CD4-positive, alpha-beta T cell (primary cell): ENCODE measurements at regions of chr3 and their contacts with region 1.

Region 1: DNA sequence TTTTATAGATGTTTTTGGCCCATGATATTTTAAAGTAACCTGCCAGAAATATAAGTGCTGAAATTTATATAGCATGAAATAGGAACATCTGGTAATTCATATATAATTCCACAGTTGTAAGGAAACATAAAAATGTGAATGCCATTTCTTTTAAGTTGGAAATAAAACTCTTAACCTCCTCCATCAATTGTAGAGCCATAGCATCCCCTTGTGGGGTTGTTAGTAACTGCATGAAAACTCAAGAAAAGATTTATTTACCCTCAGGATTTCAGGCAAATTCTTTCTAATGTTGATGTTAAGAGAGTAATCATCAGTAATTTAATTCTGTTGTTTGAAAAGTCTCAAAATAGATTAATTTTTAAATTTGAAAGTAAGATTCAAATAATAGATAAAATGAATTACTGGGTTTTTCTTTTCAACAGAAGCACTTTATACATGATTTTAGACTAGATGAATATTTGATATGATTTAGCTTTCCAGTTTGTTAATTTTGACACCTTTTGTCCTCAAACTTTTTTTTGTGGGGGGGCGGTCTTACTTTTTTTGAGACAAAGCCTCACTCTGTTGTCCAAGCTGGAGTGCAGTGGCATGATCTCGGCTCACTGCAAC is 74.7 kb downstream of the RASA2 start:
- DNase-seq: peak in 9 of 14 experiments; percentile 14 to 85 (median 39)
- ATAC-seq: peak; percentile 60
- H3K4me3 ChIP-seq: no peak overlapping the region
- H3K4me3 Mint-ChIP-seq: peak overlapping the region; percentile 55
- H3K27ac ChIP-seq: no peak overlapping the region
- H3K27ac Mint-ChIP-seq: peak overlapping the region; percentile 67
- H3K4me1 ChIP-seq: peaks cover 3% of the 10 kb centered on the region
- H3K4me1 Mint-ChIP-seq: peaks cover 40% of the 10 kb centered on the region
- H3K27me3 ChIP-seq: no peaks in the 10 kb centered on the region
- H3K27me3 Mint-ChIP-seq: no peaks in the 10 kb centered on the region
- CTCF ChIP-seq: peak; percentile 98

Region 2: DNA sequence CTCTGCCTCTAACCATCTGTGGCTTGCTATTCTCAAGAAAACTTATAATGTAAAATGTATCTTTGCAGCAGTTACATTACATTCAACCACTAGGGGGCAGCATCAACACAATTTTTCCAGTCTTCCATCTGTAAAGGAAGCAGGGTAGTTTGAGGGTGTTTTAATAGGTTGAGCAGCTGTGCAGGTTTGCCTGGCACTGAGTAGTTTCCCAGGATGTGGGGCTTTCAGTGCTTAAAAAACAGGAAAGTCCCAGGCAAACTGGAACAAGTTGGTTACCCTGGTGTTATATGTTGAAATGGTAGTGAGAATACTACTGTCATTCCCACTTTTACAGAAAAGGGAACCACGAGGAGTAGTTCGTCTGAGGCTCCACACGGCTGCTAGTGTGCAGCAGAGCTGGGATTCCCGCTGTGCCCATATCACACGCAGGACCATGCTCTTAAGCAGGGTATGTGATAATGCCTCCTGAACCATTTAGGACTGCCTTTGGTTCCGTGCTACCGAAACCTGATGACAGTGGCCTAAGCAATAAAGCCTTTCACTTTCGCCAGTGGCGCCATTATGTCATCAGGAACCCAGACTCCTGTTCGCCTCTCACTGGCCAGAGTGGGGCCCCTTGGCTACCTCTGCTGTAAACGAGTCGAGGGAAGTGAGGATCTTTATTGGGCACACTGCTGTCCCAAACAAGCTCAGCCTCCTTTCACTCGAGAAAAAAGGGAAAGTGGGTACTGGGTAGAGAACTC is 257.9 kb before region 1 on chr3:
- CTCF ChIA-PET with region 1: interaction called, 4 read pairs
- POLR2A ChIA-PET with region 1: no interaction called
- intact Hi-C with region 1: loop called in 1 of 2 experiments (anchors 5 kb)
- DNase-seq: peak in 11 of 14 experiments; percentile 16 to 89 (median 60)
- ATAC-seq: peak; percentile 43
- H3K4me3 ChIP-seq: no peak overlapping the region
- H3K4me3 Mint-ChIP-seq: no peak overlapping the region
- H3K27ac ChIP-seq: no peak overlapping the region
- H3K27ac Mint-ChIP-seq: no peak overlapping the region
- H3K4me1 ChIP-seq: peaks cover 61% of the 10 kb centered on the region
- H3K4me1 Mint-ChIP-seq: peaks cover 81% of the 10 kb centered on the region
- H3K27me3 ChIP-seq: no peaks in the 10 kb centered on the region
- H3K27me3 Mint-ChIP-seq: no peaks in the 10 kb centered on the region
- CTCF ChIP-seq: peak; percentile 80

Region 3: DNA sequence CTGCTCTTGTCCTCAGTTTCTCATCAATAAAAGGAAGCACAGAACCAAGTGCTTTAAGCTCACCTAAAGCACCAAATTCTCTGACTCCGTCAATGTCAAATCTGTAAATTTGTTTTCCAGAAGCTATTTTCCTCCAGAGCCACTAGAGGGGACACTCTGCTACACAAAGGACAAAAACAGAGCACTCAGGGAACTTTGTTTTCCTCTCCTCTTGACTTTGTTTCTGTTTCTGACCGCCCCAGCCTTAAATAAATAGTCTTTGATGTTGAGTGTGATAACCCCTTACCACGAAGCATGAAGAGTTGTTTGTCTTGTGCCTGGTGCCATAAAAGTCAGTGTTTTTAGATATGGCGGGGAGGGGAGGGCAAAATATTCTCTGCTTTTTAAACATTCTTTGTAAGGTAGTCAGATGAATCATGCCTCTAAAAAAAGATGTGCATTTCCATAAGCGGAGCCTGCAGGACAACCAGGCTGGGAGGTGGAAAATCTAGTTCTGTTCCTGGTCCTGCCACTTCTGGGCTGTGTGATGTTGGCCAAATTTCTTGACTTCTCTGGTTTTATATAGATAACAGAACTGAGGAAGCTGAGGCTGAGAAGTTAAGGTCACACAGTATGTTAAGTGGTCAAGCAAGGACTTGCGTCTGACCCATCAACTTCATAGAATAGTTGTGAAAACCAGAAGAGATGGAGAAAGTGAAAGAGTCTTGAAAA is 200.5 kb before region 1 on chr3:
- CTCF ChIA-PET with region 1: interaction called, 4 read pairs
- POLR2A ChIA-PET with region 1: no interaction called
- intact Hi-C with region 1: loop called (anchors 5 kb)
- DNase-seq: peak in 4 of 14 experiments; percentile 21 to 71 (median 68)
- ATAC-seq: peak; percentile 79
- H3K4me3 ChIP-seq: no peak overlapping the region
- H3K4me3 Mint-ChIP-seq: no peak overlapping the region
- H3K27ac ChIP-seq: no peak overlapping the region
- H3K27ac Mint-ChIP-seq: no peak overlapping the region
- H3K4me1 ChIP-seq: peaks cover 9% of the 10 kb centered on the region
- H3K4me1 Mint-ChIP-seq: peaks cover 9% of the 10 kb centered on the region
- H3K27me3 ChIP-seq: no peaks in the 10 kb centered on the region
- H3K27me3 Mint-ChIP-seq: no peaks in the 10 kb centered on the region
- CTCF ChIP-seq: peak; percentile 76

Region 4: DNA sequence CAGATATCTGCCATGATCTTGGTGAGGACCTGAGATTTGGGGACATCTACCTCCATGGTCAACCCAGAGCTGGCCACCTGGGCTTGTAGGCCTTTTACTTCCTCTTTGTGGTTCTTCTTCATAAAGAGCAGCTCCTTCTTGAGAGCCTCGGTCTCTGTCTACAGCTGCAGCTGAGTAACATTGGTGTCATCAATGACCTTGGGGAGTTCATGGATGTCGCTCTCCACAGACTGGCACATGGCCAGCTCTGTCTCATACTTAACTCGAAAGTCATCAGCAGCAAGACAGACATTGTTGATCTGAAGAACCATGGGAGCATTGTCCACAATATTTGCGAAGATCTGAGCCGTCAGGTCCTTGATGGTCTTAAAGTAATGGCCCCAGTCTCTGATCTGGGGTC is 90.4 kb before region 1 on chr3:
- CTCF ChIA-PET with region 1: interaction called, 33 read pairs
- POLR2A ChIA-PET with region 1: interaction called, 6 read pairs
- intact Hi-C with region 1: loop called (anchors 1 kb)
- DNase-seq: no peak
- ATAC-seq: no peak
- H3K4me3 ChIP-seq: no peak overlapping the region
- H3K4me3 Mint-ChIP-seq: no peak overlapping the region
- H3K27ac ChIP-seq: no peak overlapping the region
- H3K27ac Mint-ChIP-seq: no peak overlapping the region
- H3K4me1 ChIP-seq: peaks cover 7% of the 10 kb centered on the region
- H3K4me1 Mint-ChIP-seq: peaks cover 21% of the 10 kb centered on the region
- H3K27me3 ChIP-seq: no peaks in the 10 kb centered on the region
- H3K27me3 Mint-ChIP-seq: no peaks in the 10 kb centered on the region
- CTCF ChIP-seq: no peak

Region 5: GRCh38 chr3:141477224-141477623 is 84.3 kb before region 1 on chr3:
- CTCF ChIA-PET with region 1: interaction called, 33 read pairs
- POLR2A ChIA-PET with region 1: interaction called, 6 read pairs
- intact Hi-C with region 1: loop called (anchors 1 kb)
- DNase-seq: no peak
- ATAC-seq: no peak
- H3K4me3 ChIP-seq: no peak overlapping the region
- H3K4me3 Mint-ChIP-seq: no peak overlapping the region
- H3K27ac ChIP-seq: no peak overlapping the region
- H3K27ac Mint-ChIP-seq: no peak overlapping the region
- H3K4me1 ChIP-seq: peaks cover 19% of the 10 kb centered on the region
- H3K4me1 Mint-ChIP-seq: peaks cover 49% of the 10 kb centered on the region
- H3K27me3 ChIP-seq: no peaks in the 10 kb centered on the region
- H3K27me3 Mint-ChIP-seq: no peaks in the 10 kb centered on the region
- CTCF ChIP-seq: no peak

Region 6: GRCh38 chr3:141913150-141913811 is 351.8 kb after region 1 on chr3:
- CTCF ChIA-PET with region 1: no interaction called
- POLR2A ChIA-PET with region 1: no interaction called
- intact Hi-C with region 1: no loop called
- DNase-seq: peak in 12 of 14 experiments; percentile 16 to 80 (median 34)
- ATAC-seq: peak; percentile 90
- H3K4me3 ChIP-seq: no peak overlapping the region
- H3K4me3 Mint-ChIP-seq: no peak overlapping the region
- H3K27ac ChIP-seq: no peak overlapping the region
- H3K27ac Mint-ChIP-seq: no peak overlapping the region
- H3K4me1 ChIP-seq: no peaks in the 10 kb centered on the region
- H3K4me1 Mint-ChIP-seq: peaks cover 4% of the 10 kb centered on the region
- H3K27me3 ChIP-seq: no peaks in the 10 kb centered on the region
- H3K27me3 Mint-ChIP-seq: no peaks in the 10 kb centered on the region
- CTCF ChIP-seq: peak; percentile 71

Region 7: DNA sequence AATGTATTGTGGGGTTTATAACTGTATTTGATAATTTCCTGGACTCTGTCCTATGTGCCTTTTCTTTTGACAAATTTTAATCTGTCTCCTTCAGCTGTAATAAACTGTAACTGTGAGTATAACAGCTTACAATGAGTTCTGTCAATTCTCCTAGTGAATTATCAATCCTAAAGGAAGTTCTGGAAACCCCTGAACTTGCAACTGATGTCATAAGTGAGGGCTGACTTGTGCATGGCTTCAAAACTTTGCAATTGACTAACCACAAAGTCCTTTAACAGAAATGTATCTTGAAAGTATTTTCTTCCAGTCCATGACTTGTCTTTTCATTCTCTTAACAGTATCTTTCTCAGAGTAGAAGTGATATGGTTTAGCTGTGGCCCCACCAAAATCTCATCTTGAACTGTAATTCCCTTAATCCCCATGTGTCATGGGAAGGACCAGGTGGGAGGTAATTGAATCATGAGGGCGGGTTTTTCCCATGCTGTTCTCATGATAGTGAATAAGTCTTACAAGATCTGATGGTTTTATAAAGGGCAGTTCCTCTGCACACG is 479.5 kb after region 1 on chr3:
- CTCF ChIA-PET with region 1: no interaction called
- POLR2A ChIA-PET with region 1: no interaction called
- intact Hi-C with region 1: no loop called
- DNase-seq: no peak
- ATAC-seq: no peak
- H3K4me3 ChIP-seq: no peak overlapping the region
- H3K4me3 Mint-ChIP-seq: no peak overlapping the region
- H3K27ac ChIP-seq: no peak overlapping the region
- H3K27ac Mint-ChIP-seq: no peak overlapping the region
- H3K4me1 ChIP-seq: no peaks in the 10 kb centered on the region
- H3K4me1 Mint-ChIP-seq: no peaks in the 10 kb centered on the region
- H3K27me3 ChIP-seq: no peaks in the 10 kb centered on the region
- H3K27me3 Mint-ChIP-seq: no peaks in the 10 kb centered on the region
- CTCF ChIP-seq: no peak

Region 8: DNA sequence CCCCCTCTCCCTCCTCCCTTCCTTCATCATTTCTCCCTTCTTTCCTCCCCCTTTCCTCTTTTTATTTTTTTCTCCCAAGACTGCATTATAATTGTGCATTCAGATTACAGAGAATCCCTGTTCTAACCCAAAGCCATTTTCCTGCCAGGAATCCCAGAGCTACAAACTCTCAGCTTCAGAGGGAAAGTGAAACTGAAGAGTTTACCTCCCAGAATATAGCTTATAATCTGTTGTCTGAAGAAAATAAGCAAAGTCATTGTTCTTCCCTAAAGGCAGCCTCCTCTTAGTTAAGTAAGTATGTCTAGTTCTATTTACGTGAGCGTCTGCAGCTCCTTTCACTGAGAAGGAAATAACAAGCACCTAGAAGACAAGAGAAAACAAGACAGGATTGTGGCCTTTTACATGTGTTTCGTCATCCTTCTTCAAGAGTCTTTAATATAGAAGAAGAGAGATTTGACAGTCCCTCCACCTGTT is 1655.2 kb after region 1 on chr3:
- CTCF ChIA-PET with region 1: no interaction called
- POLR2A ChIA-PET with region 1: no interaction called
- intact Hi-C with region 1: no loop called
- DNase-seq: peak in 1 of 14 experiments; percentile 11
- ATAC-seq: peak; percentile 91
- H3K4me3 ChIP-seq: no peak overlapping the region
- H3K4me3 Mint-ChIP-seq: peak overlapping the region; percentile 78
- H3K27ac ChIP-seq: no peak overlapping the region
- H3K27ac Mint-ChIP-seq: peak overlapping the region; percentile 73
- H3K4me1 ChIP-seq: no peaks in the 10 kb centered on the region
- H3K4me1 Mint-ChIP-seq: peaks cover 23% of the 10 kb centered on the region
- H3K27me3 ChIP-seq: no peaks in the 10 kb centered on the region
- H3K27me3 Mint-ChIP-seq: no peaks in the 10 kb centered on the region
- CTCF ChIP-seq: no peak